ENCODE measurements at regions of chr11 and their contacts with region 1.

Region 1: DNA sequence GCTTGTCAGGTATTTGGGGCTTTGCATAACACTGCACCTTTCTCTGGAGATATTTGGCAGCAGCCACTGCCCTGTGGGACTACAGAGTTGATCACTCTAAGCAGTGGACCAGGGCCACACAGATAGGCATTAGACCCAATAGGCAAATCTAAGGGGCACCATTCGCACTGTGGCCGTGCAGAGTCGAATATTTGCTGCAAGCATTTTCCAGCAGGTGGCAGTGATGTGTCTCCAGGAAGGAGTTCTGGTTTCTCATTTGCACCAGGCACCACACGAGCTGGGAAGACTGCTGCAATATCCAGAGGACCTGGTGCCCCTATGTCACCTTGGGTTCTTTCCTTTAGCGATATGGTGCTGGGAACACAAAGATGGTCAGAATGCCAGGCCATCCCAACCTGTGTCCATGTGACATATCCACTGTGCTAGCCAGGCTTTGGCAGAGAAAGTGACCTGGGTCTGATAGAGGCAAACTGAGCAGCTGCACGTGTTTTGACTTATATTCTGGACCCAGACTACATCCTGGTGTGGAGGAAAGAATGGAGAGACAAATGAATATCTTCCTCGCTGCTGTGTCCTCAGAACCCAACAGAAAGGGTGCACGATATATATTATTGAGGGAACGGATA is 318.7 kb downstream of the BUD13 start:
- DNase-seq: no peak
- ATAC-seq: no peak
- H3K4me3 ChIP-seq: no peak overlapping the region
- H3K4me3 Mint-ChIP-seq: no peak overlapping the region
- H3K27ac ChIP-seq: no peak overlapping the region
- H3K27ac Mint-ChIP-seq: no peak overlapping the region
- H3K4me1 ChIP-seq: no peaks in the 10 kb centered on the region
- H3K4me1 Mint-ChIP-seq: peaks cover 0 to 1% (median 0%) of the 10 kb centered on the region in 7 donors
- H3K27me3 ChIP-seq: no peaks in the 10 kb centered on the region
- H3K27me3 Mint-ChIP-seq: peaks cover 5 to 22% (median 12%) of the 10 kb centered on the region in 5 donors

Region 2: GRCh38 chr11:116499396-116500003 is 45.4 kb after region 1 on chr11:
- CTCF ChIA-PET with region 1: no interaction called
- POLR2A ChIA-PET with region 1: no interaction called
- intact Hi-C with region 1: loop called in 1 of 2 experiments (anchors 1 kb)
- DNase-seq: peak in 1 of 9 donors; percentile 58
- ATAC-seq: no peak
- H3K4me3 ChIP-seq: no peak overlapping the region
- H3K4me3 Mint-ChIP-seq: no peak overlapping the region
- H3K27ac ChIP-seq: no peak overlapping the region
- H3K27ac Mint-ChIP-seq: no peak overlapping the region
- H3K4me1 ChIP-seq: no peaks in the 10 kb centered on the region
- H3K4me1 Mint-ChIP-seq: peaks cover 0 to 4% (median 0%) of the 10 kb centered on the region in 7 donors
- H3K27me3 ChIP-seq: no peaks in the 10 kb centered on the region
- H3K27me3 Mint-ChIP-seq: peaks cover 34 to 68% (median 45%) of the 10 kb centered on the region in 5 donors

Measured in naive thymus-derived CD4-positive, alpha-beta T cell (primary cell).